Right ventricle myocardium inferior (tissue), 1 donor: ENCODE measurements at regions of chr1 and their contacts with region 1.

Region 1: DNA sequence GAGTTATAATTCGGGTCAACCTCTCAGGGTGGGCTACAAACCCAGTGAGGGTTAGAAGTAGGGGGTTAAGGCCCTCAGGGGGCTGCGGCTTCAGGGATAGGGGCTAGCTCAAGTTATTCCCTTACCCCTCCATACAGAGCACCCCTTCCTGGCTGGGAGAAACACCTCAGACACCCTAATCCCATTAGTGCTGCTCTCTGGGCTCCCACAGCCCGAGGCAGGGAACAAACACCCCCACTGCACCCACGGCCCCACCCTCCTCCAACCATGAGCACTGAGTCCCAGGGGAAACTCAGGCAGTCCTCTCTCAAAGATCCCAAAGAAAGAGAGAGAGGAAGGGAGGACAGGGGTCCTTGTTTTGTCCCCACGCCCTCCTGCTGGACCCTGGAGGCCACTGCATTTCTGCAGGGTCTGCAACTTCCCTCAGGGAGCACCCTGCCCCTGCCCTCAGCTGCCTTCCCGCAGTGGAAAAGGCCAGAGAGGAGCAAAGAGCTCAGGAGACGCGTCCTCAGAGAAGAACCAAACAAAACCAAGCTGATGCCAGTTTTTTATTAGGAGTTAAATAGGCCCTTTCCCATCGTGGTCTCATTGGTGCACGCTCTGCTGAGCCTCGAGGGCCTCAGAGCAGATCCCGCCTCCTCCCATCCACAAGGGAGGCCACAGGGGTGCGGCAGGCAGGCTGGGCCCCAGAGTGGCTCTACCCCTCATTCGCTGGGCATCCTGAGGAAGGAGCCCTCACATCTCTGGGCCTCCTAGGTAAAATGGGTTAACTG is 1.4 kb upstream of the S100A4 start:
- DNase-seq: no peak
- ATAC-seq: no peak

Region 2: DNA sequence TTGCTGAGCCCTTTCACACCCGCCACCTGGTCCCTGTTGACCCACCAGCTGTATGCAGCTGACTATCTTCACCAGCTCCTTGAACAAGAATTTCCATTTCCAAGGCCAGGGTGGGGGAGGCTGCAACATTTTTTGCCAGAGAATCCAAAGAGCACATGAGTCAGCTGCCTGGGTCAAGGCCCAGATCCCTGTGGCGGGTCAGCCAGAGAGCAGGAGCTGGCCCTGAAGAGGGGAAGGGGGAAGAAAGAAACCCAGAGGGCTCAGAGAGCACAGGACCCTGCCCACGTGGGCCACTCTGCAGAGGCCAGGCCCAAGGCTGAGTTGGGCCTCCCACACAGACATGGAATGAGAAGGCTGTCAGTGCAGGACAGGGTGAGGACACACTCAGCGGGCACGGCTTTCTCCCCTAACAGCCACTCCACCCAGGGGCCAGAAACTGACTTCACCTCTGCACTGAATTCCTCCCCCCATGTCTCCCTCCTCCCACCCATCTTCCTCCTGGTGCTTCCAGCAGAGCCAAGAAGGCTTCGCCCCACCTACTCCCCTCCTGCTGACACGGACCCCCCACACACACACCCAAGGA is 40.1 kb before region 1 on chr1:
- intact Hi-C with region 1: no loop called
- DNase-seq: peak; percentile 89
- ATAC-seq: peak; percentile 90

Region 3: DNA sequence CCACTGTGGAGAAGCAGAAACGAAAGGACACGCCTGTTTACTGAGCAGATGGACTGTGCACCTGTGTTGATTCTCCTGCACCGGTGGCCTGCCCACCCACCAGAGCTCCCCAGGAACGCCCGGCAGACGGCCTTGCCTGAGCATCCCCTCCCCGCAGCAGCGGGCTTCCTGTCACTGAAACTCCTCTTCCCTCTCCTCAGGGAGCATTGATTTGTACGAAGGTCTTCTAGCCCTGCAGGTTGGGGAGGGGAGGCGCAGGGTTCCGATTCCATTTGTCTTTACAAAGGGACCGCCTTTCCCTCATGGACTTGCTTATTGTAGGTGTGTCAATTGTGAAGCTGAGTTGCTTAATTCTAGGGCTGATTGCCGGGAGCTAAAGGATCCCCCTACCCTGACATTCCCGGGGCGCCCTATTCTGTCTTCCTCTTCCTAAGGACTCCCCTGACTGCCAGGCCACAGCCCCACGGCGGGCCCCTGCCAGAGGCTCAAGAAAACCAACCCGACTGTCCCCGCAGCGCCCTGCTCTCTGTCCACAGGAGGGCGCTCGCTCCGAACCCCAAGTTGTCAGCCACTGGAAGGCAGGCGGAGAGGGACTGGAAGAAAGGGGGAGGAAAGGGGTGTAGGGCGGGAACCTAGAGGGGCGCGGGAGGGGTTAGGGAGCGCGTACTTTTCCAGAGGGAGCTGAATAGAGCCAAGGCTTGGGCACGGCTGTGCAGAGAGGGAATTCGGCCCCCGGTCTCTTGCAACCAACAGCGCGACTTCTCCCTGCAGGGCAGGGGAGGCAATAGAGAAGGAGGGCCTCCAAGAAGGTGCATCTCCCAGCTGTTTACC is 14.0 kb before region 1 on chr1:
- intact Hi-C with region 1: loop called (anchors 1 kb)
- DNase-seq: peak; percentile 92
- ATAC-seq: peak; percentile 62

Region 4: GRCh38 chr1:153566440-153567379 is 19.7 kb after region 1 on chr1:
- intact Hi-C with region 1: loop called (anchors 2 kb)
- DNase-seq: peak; percentile 97
- ATAC-seq: peak; percentile 90